ENCODE measurements at regions of chr19 and their contacts with region 1.

Region 1: DNA sequence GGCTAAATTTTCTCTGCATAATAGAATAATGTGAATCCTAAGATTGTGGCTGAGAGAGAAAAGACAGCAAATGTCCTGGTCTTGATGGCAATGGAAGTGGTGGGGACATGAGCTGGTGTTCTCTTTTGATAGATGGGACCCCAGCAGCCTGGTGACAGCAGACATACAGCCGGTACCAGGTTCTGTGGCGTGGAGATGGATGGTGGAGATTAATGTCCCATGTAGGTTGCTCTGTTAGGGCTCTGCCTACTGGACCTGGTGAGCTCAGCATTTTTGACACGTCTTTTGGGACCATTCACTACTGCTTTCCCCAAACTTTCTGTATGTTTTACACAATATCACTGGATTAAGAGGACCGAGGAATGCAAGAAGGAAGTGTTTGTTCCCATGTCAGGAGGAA is 8.2 kb upstream of the SIGLEC14 start:
- DNase-seq: no peak
- ATAC-seq: no peak
- H3K4me3 ChIP-seq: no peak overlapping the region
- H3K27ac ChIP-seq: no peak overlapping the region
- H3K4me1 ChIP-seq: peaks cover 0 to 5% of the 10 kb centered on the region in 2 experiments; a peak in 2 of 4 replicates
- H3K27me3 ChIP-seq: no peaks in the 10 kb centered on the region
- CTCF ChIP-seq: no peak
- POLR2A ChIP-seq: no peak
- RAD21 ChIP-seq: no peak

Region 2: GRCh38 chr19:51194527-51195317 is 460.1 kb before region 1 on chr19:
- CTCF ChIA-PET with region 1: no interaction called
- POLR2A ChIA-PET with region 1: no interaction called
- RAD21 ChIA-PET with region 1: no interaction called
- intact Hi-C with region 1: no loop called
- DNase-seq: no peak
- ATAC-seq: peak; percentile 84
- H3K4me3 ChIP-seq: peak overlapping the region in 1 of 2 experiments; percentile 13; a peak in 2 of 4 replicates
- H3K27ac ChIP-seq: no peak overlapping the region
- H3K4me1 ChIP-seq: peaks cover 9 to 14% of the 10 kb centered on the region in 2 experiments; a peak in 3 of 4 replicates
- H3K27me3 ChIP-seq: no peaks in the 10 kb centered on the region
- CTCF ChIP-seq: no peak
- POLR2A ChIP-seq: no peak
- RAD21 ChIP-seq: no peak

Region 3: GRCh38 chr19:51422053-51422448 is 232.7 kb before region 1 on chr19:
- CTCF ChIA-PET with region 1: interaction called, 22 read pairs
- POLR2A ChIA-PET with region 1: no interaction called
- RAD21 ChIA-PET with region 1: interaction called in 1 of 2 experiments, 3 read pairs
- intact Hi-C with region 1: loop called (anchors 5 kb)
- DNase-seq: peak; percentile 56
- ATAC-seq: peak; percentile 96
- H3K4me3 ChIP-seq: no peak overlapping the region
- H3K27ac ChIP-seq: no peak overlapping the region
- H3K4me1 ChIP-seq: no peaks in the 10 kb centered on the region; a peak in 1 of 4 replicates
- H3K27me3 ChIP-seq: peaks cover 16% of the 10 kb centered on the region; the same call in 1 of the 2 replicates
- CTCF ChIP-seq: peak; percentile 82 to 100 (median 97)
- POLR2A ChIP-seq: no peak
- RAD21 ChIP-seq: peak; percentile 81

Region 4: DNA sequence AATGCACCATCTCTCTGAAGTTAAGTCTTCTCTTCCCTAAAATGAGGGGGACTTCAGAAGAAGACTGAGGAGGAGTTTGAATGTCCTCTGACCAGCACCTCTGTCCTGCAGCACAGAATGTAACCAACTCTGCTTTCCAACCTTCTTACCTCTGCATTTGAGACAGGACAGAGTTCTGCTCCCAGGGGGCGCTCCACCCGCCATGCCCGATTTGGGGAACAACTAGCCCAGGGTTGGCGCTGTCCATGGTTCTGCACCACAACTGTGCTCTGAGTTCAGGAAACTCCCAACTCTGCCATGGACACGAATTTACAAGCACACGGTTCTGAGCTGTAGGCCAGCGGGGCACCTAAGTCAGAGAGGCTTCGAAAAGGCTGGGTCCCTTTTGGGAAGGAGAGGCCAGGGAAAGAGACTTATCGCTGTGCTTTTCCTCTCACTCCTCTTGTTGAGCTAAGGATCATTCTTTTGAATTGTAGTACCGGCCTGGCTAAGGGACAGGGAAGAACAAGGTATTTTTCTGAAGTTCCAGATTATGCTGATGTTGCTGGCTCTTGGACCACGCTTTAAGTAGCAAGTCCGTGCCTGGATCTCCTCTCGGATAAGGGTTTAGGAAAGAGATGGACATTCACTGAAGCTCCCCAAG is 46.7 kb before region 1 on chr19:
- CTCF ChIA-PET with region 1: interaction called, 26 read pairs
- POLR2A ChIA-PET with region 1: no interaction called
- RAD21 ChIA-PET with region 1: interaction called in 1 of 2 experiments, 4 read pairs
- intact Hi-C with region 1: loop called (anchors 5 kb)
- DNase-seq: peak; percentile 64
- ATAC-seq: peak; percentile 97
- H3K4me3 ChIP-seq: no peak overlapping the region
- H3K27ac ChIP-seq: no peak overlapping the region
- H3K4me1 ChIP-seq: no peaks in the 10 kb centered on the region
- H3K27me3 ChIP-seq: peaks cover 45% of the 10 kb centered on the region
- CTCF ChIP-seq: peak; percentile 72 to 93 (median 91); a peak in 5 of 6 replicates
- POLR2A ChIP-seq: no peak
- RAD21 ChIP-seq: peak; percentile 52

Measured in HCT116 (cell line).